Activated naive CD4-positive, alpha-beta T cell treated with anti-CD3 and anti-CD28 coated beads for 36 hours (primary cell): ENCODE measurements at regions of chr17 and their contacts with region 1.

Region 1: DNA sequence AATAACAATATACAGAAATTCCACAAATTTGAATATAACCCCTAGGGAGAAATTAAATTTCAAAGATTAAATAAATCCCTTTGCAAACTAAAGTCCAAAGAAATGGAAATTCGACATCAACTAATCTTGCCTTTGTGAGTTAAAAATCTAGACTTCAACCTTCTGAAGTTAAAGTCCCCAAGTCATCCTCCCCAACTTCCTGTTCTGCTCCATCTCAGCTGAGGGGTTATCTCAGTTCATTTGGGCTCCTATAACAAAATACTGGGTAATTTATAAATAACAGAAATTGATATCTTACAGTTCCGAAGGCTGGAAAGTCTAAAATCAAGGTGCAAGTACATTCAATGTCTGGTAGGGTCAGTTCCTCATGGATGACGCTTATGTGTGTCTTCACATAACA is 22.8 kb upstream of the KDM6B start:
- DNase-seq: no peak
- H3K4me3 Mint-ChIP-seq: no peak overlapping the region
- H3K27ac Mint-ChIP-seq: no peak overlapping the region
- H3K4me1 Mint-ChIP-seq: peaks cover 5% of the 10 kb centered on the region
- H3K27me3 Mint-ChIP-seq: peaks cover 3% of the 10 kb centered on the region

Region 2: DNA sequence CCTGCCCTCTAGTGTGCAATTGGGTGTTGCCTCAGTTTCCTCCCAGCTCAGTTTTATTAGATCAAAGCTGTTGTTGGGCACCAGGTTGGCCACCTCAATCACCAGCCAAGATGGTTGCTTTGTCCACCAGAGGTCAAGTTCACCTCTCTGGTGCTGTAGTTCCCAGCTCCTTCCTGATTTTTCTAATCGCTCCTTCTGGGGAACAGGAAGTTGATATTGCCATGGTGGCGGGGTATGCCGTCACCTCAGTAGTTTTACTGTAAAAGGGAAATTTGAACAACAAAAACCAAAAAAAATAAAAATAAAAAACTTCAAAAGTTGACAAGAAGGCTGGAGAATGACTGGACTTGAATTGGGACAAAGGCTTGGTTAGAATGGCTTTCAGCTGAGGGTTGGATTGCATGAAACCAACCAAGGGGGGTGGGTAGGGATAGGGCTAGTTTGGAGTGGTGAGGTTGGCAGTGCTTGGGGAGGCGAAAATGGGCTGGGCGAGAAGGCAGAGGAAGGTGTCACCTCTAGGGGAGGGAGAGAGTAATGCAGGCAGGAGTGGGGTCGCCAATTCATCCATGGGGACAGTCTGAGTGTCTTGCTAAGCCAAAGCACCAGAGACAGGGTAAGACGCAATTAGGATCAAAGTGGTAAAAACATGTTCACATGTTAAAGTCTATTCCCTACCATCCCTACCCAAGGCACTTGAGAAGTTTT is 100.0 kb before region 1 on chr17:
- CTCF ChIA-PET with region 1: no interaction called
- intact Hi-C with region 1: no loop called
- DNase-seq: peak; percentile 22
- H3K4me3 Mint-ChIP-seq: no peak overlapping the region
- H3K27ac Mint-ChIP-seq: no peak overlapping the region
- H3K4me1 Mint-ChIP-seq: peaks cover 6% of the 10 kb centered on the region
- H3K27me3 Mint-ChIP-seq: peaks cover 62% of the 10 kb centered on the region

Region 3: GRCh38 chr17:7825206-7825990 is 14.1 kb after region 1 on chr17:
- CTCF ChIA-PET with region 1: interaction called, 11 read pairs
- intact Hi-C with region 1: no loop called
- DNase-seq: no peak
- H3K4me3 Mint-ChIP-seq: no peak overlapping the region
- H3K27ac Mint-ChIP-seq: no peak overlapping the region
- H3K4me1 Mint-ChIP-seq: no peaks in the 10 kb centered on the region
- H3K27me3 Mint-ChIP-seq: no peaks in the 10 kb centered on the region